ENCODE measurements at regions of chr16 and their contacts with region 1.

Region 1: GRCh38 chr16:85305996-85306792 is 193.9 kb upstream of the CIBAR2 start:
- DNase-seq: no peak
- H3K4me3 ChIP-seq: no peak overlapping the region
- H3K27ac ChIP-seq: no peak overlapping the region
- H3K4me1 ChIP-seq: peaks cover 3 to 27% (median 23%) of the 10 kb centered on the region in 4 experiments
- H3K27me3 ChIP-seq: 0 out of 7 replicates have a peak, but pooled peaks cover 0 to 4% (median 0%) of the 10 kb centered on the region in 4 experiments
- CTCF ChIP-seq: no peak
- EP300 ChIP-seq: no peak
- POLR2A ChIP-seq: no peak
- RAD21 ChIP-seq: no peak

Region 2: GRCh38 chr16:85286970-85287824 is 19.0 kb before region 1 on chr16:
- CTCF ChIA-PET with region 1: interaction called, 14 read pairs
- POLR2A ChIA-PET with region 1: no interaction called
- DNase-seq: no peak
- H3K4me3 ChIP-seq: no peak overlapping the region
- H3K27ac ChIP-seq: no peak overlapping the region
- H3K4me1 ChIP-seq: peaks cover 0 to 12% (median 2%) of the 10 kb centered on the region in 4 experiments; a peak in 5 of 7 replicates
- H3K27me3 ChIP-seq: no peaks in the 10 kb centered on the region
- CTCF ChIP-seq: peak in 1 of 3 experiments; percentile 3; a peak in 1 of 4 replicates
- EP300 ChIP-seq: no peak
- POLR2A ChIP-seq: no peak
- RAD21 ChIP-seq: no peak

Region 3: DNA sequence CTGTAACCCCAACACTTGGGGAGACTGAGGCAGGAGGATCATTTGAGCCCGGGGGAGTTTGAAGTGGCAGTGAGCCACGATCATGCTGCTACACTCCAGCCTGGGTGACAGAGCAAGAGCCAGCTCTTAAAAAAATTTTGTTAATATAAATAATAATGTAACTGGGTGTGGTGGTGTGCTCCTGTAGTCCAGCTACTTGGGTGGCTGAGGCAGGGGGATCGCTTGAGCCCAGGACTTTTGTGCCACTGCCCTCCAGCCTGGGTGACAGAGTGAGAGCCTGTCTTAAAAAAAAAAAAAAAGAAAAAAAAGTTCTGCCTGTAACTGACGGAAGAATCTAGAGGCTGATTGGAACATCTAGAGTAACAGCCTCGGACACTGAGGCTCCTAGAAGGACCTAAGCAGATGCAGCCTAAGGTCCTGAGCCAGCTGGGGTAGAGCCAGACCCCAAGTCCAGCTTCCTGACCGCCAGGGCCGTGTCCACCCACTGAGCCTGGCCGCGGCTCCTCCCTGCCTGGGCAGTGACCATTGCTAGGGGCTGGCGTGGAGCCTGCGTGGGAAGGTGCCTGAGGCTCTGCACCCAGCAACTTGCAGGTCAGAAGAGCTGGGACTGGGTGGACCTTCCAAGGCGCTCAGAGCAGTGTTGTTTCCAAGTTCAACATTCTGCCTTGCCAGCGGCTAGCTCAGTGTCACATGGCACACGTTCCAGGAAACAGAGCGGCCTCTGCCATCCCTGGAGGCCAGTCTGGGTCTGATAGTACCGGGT is 15.5 kb after region 1 on chr16:
- CTCF ChIA-PET with region 1: interaction called, 22 read pairs
- POLR2A ChIA-PET with region 1: interaction called, 3 read pairs
- DNase-seq: no peak
- H3K4me3 ChIP-seq: no peak overlapping the region
- H3K27ac ChIP-seq: no peak overlapping the region
- H3K4me1 ChIP-seq: peaks cover 0 to 8% (median 3%) of the 10 kb centered on the region in 4 experiments; a peak in 4 of 7 replicates
- H3K27me3 ChIP-seq: peaks cover 0 to 1% (median 0%) of the 10 kb centered on the region in 4 experiments; a peak in 3 of 7 replicates
- CTCF ChIP-seq: no peak
- EP300 ChIP-seq: no peak
- POLR2A ChIP-seq: no peak
- RAD21 ChIP-seq: no peak